Activated CD4-positive, alpha-beta memory T cell treated with anti-CD3 and anti-CD28 coated beads for 36 hours (primary cell): ENCODE measurements at regions of chr1 and their contacts with region 1.

Region 1: DNA sequence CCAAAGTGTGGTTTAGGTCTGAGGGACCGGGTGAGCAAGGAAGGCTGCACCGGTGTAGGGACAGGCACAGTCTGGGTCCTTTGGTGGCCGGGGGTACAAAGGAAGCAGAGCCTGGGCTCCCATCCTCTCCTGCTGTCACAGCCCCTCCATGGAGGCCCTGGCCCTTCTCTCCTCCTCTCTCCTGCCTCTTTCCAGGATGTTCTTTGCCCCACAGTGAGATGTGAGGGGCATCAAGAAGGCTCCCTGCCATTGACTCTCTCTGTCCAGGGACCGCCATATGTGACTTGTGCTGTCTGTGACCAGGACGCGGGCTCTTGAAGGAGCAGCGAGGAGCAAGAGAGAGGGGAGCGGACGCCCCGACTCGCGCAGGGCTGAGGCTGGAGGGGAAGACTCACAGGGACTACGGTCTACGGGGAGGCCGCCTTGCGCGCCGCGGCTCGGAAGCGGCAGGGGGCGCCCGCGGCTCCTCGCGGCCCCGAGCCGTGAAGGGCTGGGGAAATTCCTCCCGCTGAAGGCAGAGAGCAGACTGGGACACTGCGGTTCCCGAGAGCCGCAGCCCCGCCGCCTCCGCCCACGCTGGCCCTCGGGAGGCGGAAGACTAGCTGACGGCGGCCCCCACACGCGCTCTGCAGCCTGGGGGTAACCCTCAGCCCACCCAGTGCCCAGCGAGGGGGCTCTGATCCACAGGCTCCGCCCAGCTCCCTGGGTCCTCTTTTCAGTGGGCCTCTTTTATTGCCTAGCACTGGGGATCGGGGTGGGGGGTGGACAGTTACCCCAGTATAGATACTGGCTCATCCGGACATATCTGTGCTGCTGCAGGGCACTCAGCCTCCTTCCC is 40.8 kb downstream of the MAB21L3 start:
- DNase-seq: peak; percentile 85
- H3K4me3 Mint-ChIP-seq: peak overlapping the region; percentile 40
- H3K27ac Mint-ChIP-seq: no peak overlapping the region
- H3K4me1 Mint-ChIP-seq: peaks cover 11% of the 10 kb centered on the region
- H3K27me3 Mint-ChIP-seq: peaks cover 1% of the 10 kb centered on the region

Region 2: GRCh38 chr1:116168277-116169097 is 16.5 kb after region 1 on chr1:
- CTCF ChIA-PET with region 1: interaction called, 22 read pairs
- POLR2A ChIA-PET with region 1: no interaction called
- intact Hi-C with region 1: loop called (anchors 2 kb)
- DNase-seq: peak; percentile 88
- H3K4me3 Mint-ChIP-seq: peak overlapping the region; percentile 72
- H3K27ac Mint-ChIP-seq: no peak overlapping the region
- H3K4me1 Mint-ChIP-seq: peaks cover 12% of the 10 kb centered on the region
- H3K27me3 Mint-ChIP-seq: no peaks in the 10 kb centered on the region